Mammary epithelial cell (primary cell): ENCODE measurements at regions of chr19 and their contacts with region 1.

Region 1: GRCh38 chr19:46529622-46530462 is 34.2 kb upstream of the PNMA8B start:
- DNase-seq: peak; percentile 69
- H3K4me3 ChIP-seq: peak overlapping the region in 1 of 3 experiments; percentile 5
- H3K27ac ChIP-seq: peak overlapping the region; percentile 22
- H3K4me1 ChIP-seq: peaks cover 16% of the 10 kb centered on the region
- H3K27me3 ChIP-seq: no peaks in the 10 kb centered on the region
- CTCF ChIP-seq: peak; percentile 86 to 94

Region 2: GRCh38 chr19:46283771-46284170 is 246.1 kb before region 1 on chr19:
- CTCF ChIA-PET with region 1: interaction called, 7 read pairs
- dilution Hi-C with region 1: loop called (anchors 5 kb)
- in situ Hi-C with region 1: no loop called
- intact Hi-C with region 1: no loop called
- DNase-seq: no peak
- H3K4me3 ChIP-seq: no peak overlapping the region
- H3K27ac ChIP-seq: no peak overlapping the region
- H3K4me1 ChIP-seq: peaks cover under 1% of the 10 kb centered on the region
- H3K27me3 ChIP-seq: no peaks in the 10 kb centered on the region
- CTCF ChIP-seq: no peak

Region 3: DNA sequence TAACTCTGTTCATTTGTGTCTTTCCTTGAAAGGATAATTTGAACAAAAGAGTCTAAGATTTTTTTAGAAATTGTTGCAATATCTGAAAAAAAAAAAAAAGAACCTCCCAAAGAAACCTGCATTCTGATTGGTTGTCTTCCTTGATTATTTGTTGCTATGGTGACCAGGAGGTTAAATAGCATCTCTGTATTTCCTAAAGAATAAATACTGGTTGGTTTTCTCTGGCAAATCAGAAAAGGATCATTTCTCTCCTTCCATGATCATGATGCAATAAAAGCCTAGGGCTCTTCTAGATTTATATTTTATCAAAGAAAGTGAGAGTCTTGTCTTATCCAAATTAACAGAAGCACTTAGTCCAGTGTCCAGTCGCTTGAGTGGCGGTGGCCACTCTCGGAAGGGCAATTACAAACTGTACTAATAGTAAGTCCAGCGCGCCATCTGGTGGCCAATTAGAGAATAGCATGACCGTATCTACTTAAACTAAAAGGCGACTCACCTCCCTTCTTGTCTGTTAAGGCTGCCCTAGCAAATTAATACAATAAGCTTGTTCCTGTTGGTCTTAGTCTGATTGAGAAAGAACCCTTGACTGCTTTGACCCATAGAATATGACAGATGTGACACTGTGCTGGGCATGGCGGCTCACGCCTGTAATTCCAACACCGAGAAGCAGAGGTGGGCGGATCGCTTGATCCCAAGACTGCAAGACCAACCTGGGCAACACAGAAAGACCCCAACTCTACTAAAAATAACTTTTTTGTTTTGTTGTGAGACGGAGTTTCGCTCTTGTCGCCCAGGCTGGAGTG is 12.8 kb after region 1 on chr19:
- CTCF ChIA-PET with region 1: interaction called, 5 read pairs
- dilution Hi-C with region 1: no loop called
- in situ Hi-C with region 1: no loop called
- intact Hi-C with region 1: loop called (anchors 1 kb)
- DNase-seq: peak; percentile 76
- H3K4me3 ChIP-seq: no peak overlapping the region
- H3K27ac ChIP-seq: no peak overlapping the region
- H3K4me1 ChIP-seq: no peaks in the 10 kb centered on the region
- H3K27me3 ChIP-seq: no peaks in the 10 kb centered on the region
- CTCF ChIP-seq: peak; percentile 72 to 75

Region 4: DNA sequence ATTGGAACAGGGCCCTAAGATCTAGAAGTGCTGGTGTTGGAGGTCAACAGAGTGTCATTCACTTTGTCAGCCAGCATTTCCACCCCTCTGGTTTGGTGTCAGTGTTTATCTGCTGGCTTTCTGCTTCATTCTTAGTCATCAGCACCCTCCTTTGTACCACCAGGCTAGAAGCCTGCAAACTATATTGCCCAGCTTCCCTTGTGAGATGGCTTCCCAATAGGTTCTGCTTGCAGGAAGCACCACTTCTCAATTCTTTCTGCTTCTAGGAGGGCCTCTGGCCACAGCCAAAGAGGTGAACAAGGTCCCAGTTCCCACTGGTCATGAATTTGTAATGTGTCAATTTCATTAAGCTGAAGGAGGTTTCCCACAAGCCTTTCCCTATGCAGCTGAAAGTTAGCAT is 34.9 kb after region 1 on chr19:
- CTCF ChIA-PET with region 1: no interaction called
- dilution Hi-C with region 1: loop called (anchors 5 kb)
- in situ Hi-C with region 1: no loop called
- intact Hi-C with region 1: loop called (anchors 1 kb)
- DNase-seq: no peak
- H3K4me3 ChIP-seq: no peak overlapping the region
- H3K27ac ChIP-seq: no peak overlapping the region
- H3K4me1 ChIP-seq: no peaks in the 10 kb centered on the region
- H3K27me3 ChIP-seq: no peaks in the 10 kb centered on the region
- CTCF ChIP-seq: no peak

Region 5: DNA sequence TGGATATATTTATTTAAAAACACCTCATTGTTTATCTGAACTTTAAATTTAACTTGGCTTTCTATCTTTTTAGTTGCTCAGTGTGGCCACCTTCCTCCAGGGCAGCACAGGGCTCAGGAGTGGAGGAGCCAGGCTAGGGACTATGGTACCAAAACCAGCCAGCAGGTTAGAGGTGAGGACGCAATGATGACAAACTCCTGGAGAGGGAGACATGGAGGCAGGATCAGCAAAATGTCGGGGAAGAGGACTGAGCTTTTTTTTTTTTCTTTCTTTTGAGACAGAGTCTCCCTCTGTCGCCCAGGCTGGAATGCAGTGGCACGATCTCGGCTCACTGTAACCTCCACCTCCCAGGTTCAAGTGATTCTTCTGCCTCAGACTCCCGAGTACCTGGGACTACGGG is 41.7 kb after region 1 on chr19:
- CTCF ChIA-PET with region 1: no interaction called
- dilution Hi-C with region 1: loop called (anchors 5 kb)
- in situ Hi-C with region 1: no loop called
- intact Hi-C with region 1: loop called (anchors 1 kb)
- DNase-seq: peak; percentile 16
- H3K4me3 ChIP-seq: no peak overlapping the region
- H3K27ac ChIP-seq: no peak overlapping the region
- H3K4me1 ChIP-seq: no peaks in the 10 kb centered on the region
- H3K27me3 ChIP-seq: no peaks in the 10 kb centered on the region
- CTCF ChIP-seq: peak in 1 of 2 donors; percentile 38

Region 6: GRCh38 chr19:46661020-46661731 is 131.3 kb after region 1 on chr19 and contains the start of gene DACT3:
- CTCF ChIA-PET with region 1: interaction called, 5 read pairs
- dilution Hi-C with region 1: no loop called
- in situ Hi-C with region 1: no loop called
- intact Hi-C with region 1: loop called (anchors 1 kb)
- DNase-seq: peak; percentile 100
- H3K4me3 ChIP-seq: peak within 1 kb of the TSS; percentile 40 to 50 (median 42)
- H3K27ac ChIP-seq: peak within 1 kb of the TSS; percentile 48
- H3K4me1 ChIP-seq: peaks cover 9% of the 10 kb centered on the region
- H3K27me3 ChIP-seq: no peaks in the 10 kb centered on the region
- CTCF ChIP-seq: no peak
- total RNA-seq, gene DACT3: 0.31 to 0.33 TPM

Region 7: DNA sequence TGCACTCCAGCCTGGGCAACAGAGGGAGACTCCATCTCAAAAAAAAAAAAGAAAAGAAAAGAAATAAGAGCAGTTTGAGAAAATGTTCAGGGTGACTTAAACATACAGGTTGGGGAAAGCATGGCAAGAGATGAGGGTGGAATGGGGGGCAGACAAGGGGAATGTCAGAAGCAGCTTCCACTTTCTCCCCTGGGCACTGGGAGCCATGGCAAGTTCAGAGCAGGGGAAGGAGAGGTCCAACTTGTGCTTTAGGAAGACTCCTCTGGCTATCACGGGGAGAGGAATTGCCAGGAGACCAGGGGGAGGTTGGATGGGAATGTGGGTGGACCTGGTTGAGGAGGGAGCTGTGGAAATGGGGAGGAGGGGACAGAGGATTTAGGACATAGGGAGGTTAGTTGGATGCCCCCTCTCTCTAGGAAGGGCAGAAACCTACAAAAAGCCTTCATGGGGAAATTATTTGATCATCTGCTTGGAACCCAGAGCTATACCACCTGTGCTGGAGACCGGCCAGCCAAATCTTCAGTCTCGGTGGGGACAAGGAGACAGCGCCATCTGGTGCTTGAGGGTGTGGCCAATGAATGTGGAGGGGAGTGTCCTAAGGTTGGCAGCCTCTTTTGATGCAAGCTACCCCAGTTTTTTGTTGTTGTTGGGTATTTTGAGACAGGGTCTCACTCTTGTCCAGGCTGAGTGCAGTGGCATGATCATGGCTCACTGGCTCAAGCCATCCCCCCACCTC is 223.7 kb after region 1 on chr19:
- CTCF ChIA-PET with region 1: no interaction called
- dilution Hi-C with region 1: no loop called
- in situ Hi-C with region 1: no loop called
- intact Hi-C with region 1: loop called (anchors 5 kb)
- DNase-seq: peak; percentile 29
- H3K4me3 ChIP-seq: no peak overlapping the region
- H3K27ac ChIP-seq: no peak overlapping the region
- H3K4me1 ChIP-seq: peaks cover 3% of the 10 kb centered on the region
- H3K27me3 ChIP-seq: no peaks in the 10 kb centered on the region
- CTCF ChIP-seq: peak; percentile 51 to 55